ENCODE measurements at regions of chr13 and their contacts with region 1.

Region 1: DNA sequence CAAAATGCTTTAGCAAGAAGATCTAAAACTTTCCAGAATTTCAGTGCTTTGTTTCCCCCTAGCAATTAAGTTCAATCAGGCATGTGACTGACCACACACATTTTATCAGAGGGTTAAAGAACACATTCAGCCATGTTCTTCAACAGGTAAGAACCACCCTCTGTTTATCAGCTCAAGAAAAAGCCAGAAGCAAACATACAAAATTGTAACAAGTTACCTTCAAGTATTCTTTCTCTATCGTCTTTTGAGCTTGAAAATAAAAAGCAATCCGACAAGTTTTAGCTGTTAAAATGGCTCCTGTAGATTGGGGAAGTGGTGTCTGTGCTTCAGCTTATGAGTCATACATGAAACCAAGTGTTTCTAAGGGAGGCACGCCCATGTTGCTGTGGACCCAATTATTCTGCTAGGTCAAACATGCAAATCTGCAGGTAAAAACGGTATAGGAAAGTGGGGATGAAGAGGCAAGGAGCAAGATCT is at the start of gene ELF1:
- DNase-seq: peak; percentile 71
- H3K4me3 Mint-ChIP-seq: peak within 1 kb of the TSS; percentile 88
- H3K27ac Mint-ChIP-seq: peak within 1 kb of the TSS; percentile 98
- H3K4me1 Mint-ChIP-seq: peaks cover 41% of the 10 kb centered on the region
- H3K27me3 Mint-ChIP-seq: no peaks in the 10 kb centered on the region
- total RNA-seq, gene ELF1: 159 to 169 TPM

Region 2: GRCh38 chr13:40922437-40923040 is 96.5 kb before region 1 on chr13:
- CTCF ChIA-PET with region 1: interaction called, 4 read pairs
- POLR2A ChIA-PET with region 1: interaction called, 19 read pairs
- DNase-seq: no peak
- H3K4me3 Mint-ChIP-seq: peak overlapping the region; percentile 41
- H3K27ac Mint-ChIP-seq: peak overlapping the region; percentile 53
- H3K4me1 Mint-ChIP-seq: peaks cover 19% of the 10 kb centered on the region
- H3K27me3 Mint-ChIP-seq: no peaks in the 10 kb centered on the region

Region 3: GRCh38 chr13:40982772-40983171 is 36.3 kb before region 1 on chr13:
- CTCF ChIA-PET with region 1: interaction called, 14 read pairs
- POLR2A ChIA-PET with region 1: interaction called, 445 read pairs
- DNase-seq: peak; percentile 65
- H3K4me3 Mint-ChIP-seq: peak overlapping the region; percentile 80
- H3K27ac Mint-ChIP-seq: peak overlapping the region; percentile 92
- H3K4me1 Mint-ChIP-seq: peaks cover 51% of the 10 kb centered on the region
- H3K27me3 Mint-ChIP-seq: no peaks in the 10 kb centered on the region

Region 4: DNA sequence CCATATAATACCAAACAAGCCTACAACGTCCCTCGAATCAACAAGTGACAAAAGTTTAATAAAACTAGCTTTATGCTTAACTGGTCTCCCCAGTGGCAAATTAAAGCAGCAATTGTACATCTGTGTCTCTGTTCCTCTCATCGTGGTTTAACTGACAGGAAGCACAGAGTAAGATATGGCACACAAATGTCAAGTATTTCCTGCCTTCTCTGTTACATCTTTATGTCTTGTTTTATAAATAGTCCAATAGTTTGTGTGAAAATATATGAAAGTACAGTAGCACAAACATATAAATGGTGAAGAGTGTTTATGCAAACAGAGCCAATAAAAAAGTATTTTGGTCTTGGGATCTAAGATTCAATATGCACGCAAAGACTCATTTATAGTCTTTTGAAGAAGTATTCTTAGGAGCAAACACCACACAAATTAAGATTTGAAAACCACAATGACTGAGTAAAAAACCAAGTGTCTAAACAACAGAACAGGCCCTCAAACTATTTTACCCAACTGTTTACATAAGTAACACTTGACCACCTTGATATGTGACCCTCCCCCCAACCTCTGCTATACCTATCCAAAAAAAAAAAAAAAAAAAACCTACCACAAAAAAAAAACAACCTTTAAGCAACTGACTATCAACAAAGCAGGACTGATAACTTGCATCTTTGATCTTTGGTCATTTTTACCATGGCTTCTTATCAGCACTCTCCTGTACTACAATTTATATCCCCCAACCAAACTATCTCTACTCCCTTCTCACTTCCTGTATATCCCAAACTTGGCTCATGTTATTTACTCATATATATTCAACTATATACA is 14.0 kb before region 1 on chr13:
- CTCF ChIA-PET with region 1: interaction called, 11 read pairs
- POLR2A ChIA-PET with region 1: interaction called, 144 read pairs
- DNase-seq: no peak
- H3K4me3 Mint-ChIP-seq: peak overlapping the region; percentile 55
- H3K27ac Mint-ChIP-seq: peak overlapping the region; percentile 95
- H3K4me1 Mint-ChIP-seq: peaks cover 71% of the 10 kb centered on the region
- H3K27me3 Mint-ChIP-seq: no peaks in the 10 kb centered on the region

Region 5: GRCh38 chr13:41054212-41054877 is 35.3 kb after region 1 on chr13:
- CTCF ChIA-PET with region 1: interaction called, 33 read pairs
- POLR2A ChIA-PET with region 1: interaction called, 147 read pairs
- DNase-seq: peak; percentile 38
- H3K4me3 Mint-ChIP-seq: no peak overlapping the region
- H3K27ac Mint-ChIP-seq: no peak overlapping the region
- H3K4me1 Mint-ChIP-seq: peaks cover 58% of the 10 kb centered on the region
- H3K27me3 Mint-ChIP-seq: no peaks in the 10 kb centered on the region

Measured in activated CD4-positive, alpha-beta memory T cell treated with anti-CD3 and anti-CD28 coated beads, Interleukin-2, amount 10 ng/mL, durations not matched to agents 7 days and 5 days (primary cell).